ENCODE measurements at regions of chr14 and their contacts with region 1.

Region 1: DNA sequence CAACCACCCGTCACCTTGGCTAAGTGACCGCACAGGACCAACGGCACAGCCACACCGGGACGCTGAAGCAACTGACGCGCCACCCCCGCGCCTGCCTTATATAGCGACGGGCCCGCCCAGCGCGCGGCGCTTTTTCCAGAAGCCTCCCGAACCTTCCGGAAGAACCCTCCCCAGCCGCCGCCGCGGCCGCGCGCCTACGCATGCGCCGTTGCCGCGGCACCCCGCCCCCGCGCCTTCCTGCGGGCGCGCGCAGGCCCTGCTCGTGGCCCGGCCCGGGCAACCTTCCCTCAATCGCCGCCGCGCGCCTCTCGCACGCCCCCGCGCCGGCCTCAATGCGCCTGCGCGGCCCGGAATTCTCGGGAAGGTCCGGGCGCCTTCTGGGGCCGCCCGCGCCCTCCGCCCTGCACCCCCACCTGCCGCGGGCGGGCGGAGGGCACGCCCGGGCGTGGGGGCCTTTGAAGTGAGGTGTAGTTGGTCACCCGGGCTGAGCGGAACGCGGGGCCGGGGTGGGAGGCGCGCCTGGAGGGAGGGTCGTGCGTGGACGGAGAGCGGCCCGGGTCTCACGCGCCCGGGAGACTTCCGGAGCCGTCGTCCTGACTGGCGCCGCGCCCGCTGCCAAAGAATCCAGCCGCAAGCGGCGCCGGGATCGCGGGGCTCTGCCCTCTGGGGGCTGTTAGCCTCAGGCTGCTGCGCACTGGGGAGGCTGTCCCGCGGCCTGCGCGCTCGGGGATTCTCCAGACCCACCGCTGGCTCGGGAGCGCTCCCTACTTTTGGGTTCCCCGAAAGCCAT is at the start of gene HSP90AA1:
- DNase-seq: peak; percentile 96
- H3K4me3 ChIP-seq: peak within 1 kb of the TSS; percentile 88 to 96 (median 96)
- H3K27ac ChIP-seq: peak within 1 kb of the TSS; percentile 86
- H3K4me1 ChIP-seq: peaks cover 40% of the 10 kb centered on the region
- H3K27me3 ChIP-seq: no peaks in the 10 kb centered on the region
- CTCF ChIP-seq: peak in 1 of 2 donors; percentile 11
- POLR2A ChIP-seq: peak; percentile 99
- total RNA-seq, gene HSP90AA1: 504 and 540 TPM in 2 replicates

Region 2: DNA sequence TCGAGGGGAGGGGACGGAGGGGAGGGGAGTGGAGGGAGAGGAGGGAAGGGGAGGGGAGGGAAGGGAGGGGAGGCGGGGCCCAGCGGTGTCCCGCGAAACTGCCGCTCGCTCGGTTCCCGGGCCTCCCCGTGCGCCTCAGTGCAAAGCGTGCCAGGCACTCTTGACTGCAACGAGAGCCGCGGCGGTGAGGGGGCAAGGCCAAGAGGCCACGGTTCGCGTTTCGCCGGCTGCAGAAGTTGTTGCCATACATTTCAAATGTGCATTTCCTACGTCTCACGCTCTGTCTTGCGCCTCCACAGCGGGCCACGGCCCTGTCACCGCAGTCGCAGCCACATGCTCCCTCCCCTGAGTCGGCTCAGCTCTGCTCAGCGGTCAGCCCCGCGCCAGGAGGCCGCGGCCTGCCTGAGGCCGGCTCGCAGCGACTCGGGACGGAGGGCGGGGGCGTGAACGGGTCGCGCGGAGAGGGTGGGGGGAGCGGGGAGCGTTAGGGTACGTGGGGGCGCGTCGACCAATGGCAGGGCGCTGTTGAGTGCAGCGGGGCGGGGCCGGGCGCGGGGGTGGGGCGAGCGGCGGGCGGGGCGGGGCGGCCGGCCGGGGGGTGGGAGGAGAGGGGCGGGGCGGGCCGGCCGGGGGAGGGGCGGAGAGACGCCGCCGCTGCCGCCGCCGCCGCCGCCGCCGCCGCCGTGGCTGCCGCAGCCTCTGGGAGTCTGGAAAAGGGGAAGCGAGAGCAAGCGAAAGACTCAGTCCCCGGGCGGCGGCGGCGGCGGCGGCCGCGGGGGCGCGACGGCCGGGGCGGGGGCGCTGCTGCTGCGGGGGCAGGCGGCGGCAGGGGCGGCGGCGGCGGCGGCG is 325.9 kb before region 1 on chr14 and contains the start of gene PPP2R5C:
- CTCF ChIA-PET with region 1: no interaction called
- POLR2A ChIA-PET with region 1: no interaction called
- dilution Hi-C with region 1: no loop called
- intact Hi-C with region 1: loop called (anchors 2 kb)
- DNase-seq: peak; percentile 83
- H3K4me3 ChIP-seq: peak within 1 kb of the TSS; percentile 50 to 64 (median 52)
- H3K27ac ChIP-seq: no peak within 1 kb of the TSS
- H3K4me1 ChIP-seq: peaks cover 6% of the 10 kb centered on the region
- H3K27me3 ChIP-seq: peaks cover 13 to 32% of the 10 kb centered on the region in 2 experiments
- CTCF ChIP-seq: no peak
- POLR2A ChIP-seq: no peak
- total RNA-seq, gene PPP2R5C: 83.6 and 89.0 TPM in 2 replicates

Region 3: GRCh38 chr14:101964297-101965144 is 122.6 kb before region 1 on chr14 and contains the start of gene DYNC1H1:
- CTCF ChIA-PET with region 1: no interaction called
- POLR2A ChIA-PET with region 1: no interaction called
- dilution Hi-C with region 1: no loop called
- intact Hi-C with region 1: loop called (anchors 5 kb)
- DNase-seq: peak; percentile 96
- H3K4me3 ChIP-seq: peak within 1 kb of the TSS; percentile 75 to 95 (median 90)
- H3K27ac ChIP-seq: peak within 1 kb of the TSS; percentile 64
- H3K4me1 ChIP-seq: peaks cover 14% of the 10 kb centered on the region
- H3K27me3 ChIP-seq: no peaks in the 10 kb centered on the region
- CTCF ChIP-seq: no peak
- POLR2A ChIP-seq: peak; percentile 93
- total RNA-seq, gene DYNC1H1: 596 and 648 TPM in 2 replicates

Region 4: GRCh38 chr14:102063091-102063802 is 23.9 kb before region 1 on chr14:
- CTCF ChIA-PET with region 1: interaction called, 9 read pairs
- POLR2A ChIA-PET with region 1: interaction called, 3 read pairs
- dilution Hi-C with region 1: no loop called
- intact Hi-C with region 1: loop called (anchors 1 kb)
- DNase-seq: peak; percentile 94
- H3K4me3 ChIP-seq: no peak overlapping the region
- H3K27ac ChIP-seq: no peak overlapping the region
- H3K4me1 ChIP-seq: no peaks in the 10 kb centered on the region
- H3K27me3 ChIP-seq: no peaks in the 10 kb centered on the region
- CTCF ChIP-seq: peak; percentile 32 to 53
- POLR2A ChIP-seq: no peak

Region 5: DNA sequence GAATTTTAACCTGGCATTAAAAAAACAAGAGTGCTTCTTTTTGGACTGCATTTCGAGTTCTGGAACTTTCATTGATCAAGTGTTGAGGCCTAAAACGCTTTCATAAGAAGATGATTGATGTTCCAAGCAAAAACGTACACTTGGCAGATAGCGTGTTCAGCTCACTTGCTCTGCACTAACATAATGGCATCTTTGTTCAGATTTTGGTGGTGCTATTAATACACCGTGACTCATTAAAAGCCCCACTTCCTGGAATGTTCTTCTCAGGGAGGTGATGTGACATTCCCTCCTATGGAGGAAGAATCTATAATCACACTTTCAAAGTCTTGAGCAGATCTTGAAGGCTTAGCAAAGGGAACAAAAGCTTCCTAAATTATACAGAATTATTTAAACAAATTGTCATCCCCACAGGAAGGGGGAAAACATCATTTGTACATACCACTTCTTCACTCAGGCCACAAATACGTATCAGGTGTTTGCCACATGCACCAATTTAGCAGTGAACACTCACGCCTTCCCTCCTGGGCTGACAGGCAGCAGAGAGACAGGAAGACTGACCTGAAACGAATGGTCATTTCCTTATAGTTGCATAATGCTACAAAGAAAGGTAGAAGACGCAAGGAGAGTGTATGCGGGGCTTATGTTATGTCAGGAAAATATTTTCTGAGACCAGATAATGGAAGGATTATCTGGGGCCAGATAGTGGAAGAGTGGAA is 15.7 kb before region 1 on chr14:
- CTCF ChIA-PET with region 1: interaction called, 3 read pairs
- POLR2A ChIA-PET with region 1: interaction called, 6 read pairs
- dilution Hi-C with region 1: no loop called
- intact Hi-C with region 1: loop called (anchors 2 kb)
- DNase-seq: no peak
- H3K4me3 ChIP-seq: no peak overlapping the region
- H3K27ac ChIP-seq: peak overlapping the region; percentile 8
- H3K4me1 ChIP-seq: peaks cover 8% of the 10 kb centered on the region
- H3K27me3 ChIP-seq: no peaks in the 10 kb centered on the region
- CTCF ChIP-seq: no peak
- POLR2A ChIP-seq: no peak

Region 6: DNA sequence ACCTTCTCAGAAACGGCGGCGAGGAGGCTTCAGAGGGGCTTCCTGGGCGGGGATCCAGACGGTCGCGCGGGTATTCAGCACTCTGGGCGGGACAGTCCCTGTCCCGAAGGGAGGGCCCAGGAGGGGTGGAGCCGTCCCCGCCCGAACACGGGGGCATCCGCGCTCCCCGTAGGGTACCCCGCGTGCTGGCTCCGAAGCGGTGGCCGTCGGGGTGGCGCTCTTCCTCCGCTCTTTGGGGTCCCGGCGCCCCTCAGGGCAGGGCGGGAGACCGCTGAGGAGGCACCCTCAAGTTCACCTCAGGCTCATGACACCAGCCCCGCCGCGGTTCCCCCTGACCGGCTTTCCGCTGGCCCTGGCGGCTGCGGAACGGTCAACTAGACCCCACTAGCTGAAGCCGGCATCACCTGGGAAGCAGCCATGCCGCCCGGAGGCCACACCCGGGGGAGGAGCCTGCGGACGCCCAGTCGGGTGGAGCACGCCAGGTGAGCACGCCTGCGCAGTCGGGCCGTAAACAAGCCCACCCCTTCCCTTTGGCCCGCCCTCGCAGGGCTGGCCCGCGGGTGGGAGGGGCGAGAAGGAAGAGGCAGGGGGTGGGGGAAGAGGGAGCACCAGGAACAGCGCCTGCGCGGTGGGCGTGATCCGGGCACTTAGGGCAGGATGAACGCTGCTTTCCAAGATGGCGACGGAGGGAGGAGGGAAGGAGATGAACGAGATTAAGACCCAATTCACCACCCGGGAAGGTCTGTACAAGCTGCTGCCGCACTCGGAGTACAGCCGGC is 52.3 kb after region 1 on chr14 and contains the start of gene WDR20:
- CTCF ChIA-PET with region 1: no interaction called
- POLR2A ChIA-PET with region 1: no interaction called
- dilution Hi-C with region 1: no loop called
- intact Hi-C with region 1: loop called (anchors 1 kb)
- DNase-seq: peak; percentile 97
- H3K4me3 ChIP-seq: peak within 1 kb of the TSS; percentile 57 to 79 (median 72)
- H3K27ac ChIP-seq: peak within 1 kb of the TSS; percentile 19
- H3K4me1 ChIP-seq: peaks cover 17% of the 10 kb centered on the region
- H3K27me3 ChIP-seq: no peaks in the 10 kb centered on the region
- CTCF ChIP-seq: no peak
- POLR2A ChIP-seq: peak; percentile 77
- total RNA-seq, gene WDR20: 22.4 and 23.6 TPM in 2 replicates

Region 7: DNA sequence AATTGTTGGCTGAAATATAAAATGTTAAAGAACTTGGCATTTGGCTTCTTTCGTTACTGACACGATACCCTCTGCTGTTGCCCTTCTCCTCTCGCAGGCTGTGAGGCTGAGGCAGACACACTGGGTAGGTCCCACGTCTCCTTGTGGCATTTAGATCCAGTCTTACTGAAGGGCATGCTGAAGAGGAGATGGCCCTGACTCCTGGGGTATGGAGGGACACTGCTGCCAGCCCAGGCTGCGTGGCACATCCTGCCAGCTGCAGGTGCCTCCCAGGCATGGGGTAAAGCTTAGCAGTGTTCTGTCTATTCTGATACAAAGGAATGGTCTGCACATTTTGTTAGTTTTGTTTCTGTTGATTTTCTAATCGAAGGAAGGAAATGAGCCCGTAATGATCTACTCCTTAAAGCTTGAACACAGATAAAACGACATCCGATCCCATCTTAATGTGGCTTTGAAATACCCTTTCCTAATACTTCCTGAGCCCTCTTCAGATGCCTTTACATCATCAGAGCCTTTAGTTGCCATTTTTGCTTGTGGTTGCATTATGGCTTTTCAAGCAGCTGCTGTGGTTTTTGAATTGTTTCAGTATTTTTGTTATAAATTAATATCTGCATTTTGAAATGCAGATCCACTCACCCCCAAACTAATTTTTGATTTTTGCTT is 113.7 kb after region 1 on chr14:
- CTCF ChIA-PET with region 1: no interaction called
- POLR2A ChIA-PET with region 1: no interaction called
- dilution Hi-C with region 1: no loop called
- intact Hi-C with region 1: no loop called
- DNase-seq: no peak
- H3K4me3 ChIP-seq: no peak overlapping the region
- H3K27ac ChIP-seq: no peak overlapping the region
- H3K4me1 ChIP-seq: no peaks in the 10 kb centered on the region
- H3K27me3 ChIP-seq: no peaks in the 10 kb centered on the region
- CTCF ChIP-seq: no peak
- POLR2A ChIP-seq: no peak

Measured in endothelial cell of umbilical vein (primary cell).